Right cardiac atrium (tissue), 5 donors: ENCODE measurements at regions of chr1 and their contacts with region 1.

Region 1: DNA sequence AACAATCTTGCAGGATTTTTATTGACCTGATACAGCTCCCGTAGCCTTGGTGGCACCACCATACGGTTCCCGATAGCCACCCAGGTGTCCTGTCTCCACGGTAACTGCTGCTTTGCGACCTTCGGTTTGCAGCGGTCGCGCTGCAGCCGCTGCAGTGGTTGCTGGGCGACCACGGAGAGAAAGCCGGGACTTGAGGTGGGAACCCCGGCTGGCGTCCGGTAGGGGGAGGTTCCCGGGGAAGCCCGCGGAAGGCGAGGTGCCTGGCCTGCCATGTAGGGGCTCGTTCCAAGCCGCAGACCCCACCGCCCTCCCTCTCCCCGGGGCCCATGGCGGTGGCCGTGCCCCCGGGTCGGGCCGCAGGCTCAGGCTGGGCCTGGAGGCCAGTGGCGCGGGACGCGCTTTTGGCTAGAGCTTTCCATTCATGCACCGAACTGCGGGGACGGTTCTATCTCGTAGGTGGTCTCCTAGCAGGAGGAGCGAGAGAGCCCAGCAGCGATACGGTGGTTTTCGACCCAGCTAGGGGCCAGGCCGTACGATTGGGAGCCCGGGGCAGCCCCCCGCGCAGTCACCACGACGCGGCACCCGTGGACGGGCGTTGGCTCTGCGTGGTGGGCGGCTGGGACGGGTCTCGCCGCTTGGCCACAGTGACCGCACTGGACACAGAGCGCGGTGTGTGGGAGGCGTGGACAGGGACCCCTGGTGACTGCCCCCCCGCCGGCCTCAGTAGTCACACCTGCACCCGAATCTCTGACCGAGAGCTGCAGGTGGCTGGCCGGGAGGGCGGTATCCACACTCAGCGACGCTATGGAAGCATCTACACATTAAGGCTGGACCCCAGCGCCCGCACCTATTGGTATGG is at the start of gene KLHDC9:
- DNase-seq: peak; percentile 73 to 89 (median 88)
- ATAC-seq: peak; percentile 78 to 81
- H3K4me3 ChIP-seq: peak within 1 kb of the TSS; percentile 38
- H3K27ac ChIP-seq: no peak within 1 kb of the TSS
- H3K4me1 ChIP-seq: peaks cover 5% of the 10 kb centered on the region
- H3K27me3 ChIP-seq: no peaks in the 10 kb centered on the region
- total RNA-seq, gene KLHDC9: 3.4 to 5.4 (median 4.4) TPM

Region 2: GRCh38 chr1:160830321-160831153 is 267.9 kb before region 1 on chr1:
- intact Hi-C with region 1: loop called in 1 of 4 experiments (anchors 10 kb)
- DNase-seq: peak; percentile 51 to 86 (median 73)
- ATAC-seq: peak; percentile 38 to 67
- H3K4me3 ChIP-seq: no peak overlapping the region
- H3K27ac ChIP-seq: no peak overlapping the region
- H3K4me1 ChIP-seq: no peaks in the 10 kb centered on the region
- H3K27me3 ChIP-seq: no peaks in the 10 kb centered on the region

Region 3: DNA sequence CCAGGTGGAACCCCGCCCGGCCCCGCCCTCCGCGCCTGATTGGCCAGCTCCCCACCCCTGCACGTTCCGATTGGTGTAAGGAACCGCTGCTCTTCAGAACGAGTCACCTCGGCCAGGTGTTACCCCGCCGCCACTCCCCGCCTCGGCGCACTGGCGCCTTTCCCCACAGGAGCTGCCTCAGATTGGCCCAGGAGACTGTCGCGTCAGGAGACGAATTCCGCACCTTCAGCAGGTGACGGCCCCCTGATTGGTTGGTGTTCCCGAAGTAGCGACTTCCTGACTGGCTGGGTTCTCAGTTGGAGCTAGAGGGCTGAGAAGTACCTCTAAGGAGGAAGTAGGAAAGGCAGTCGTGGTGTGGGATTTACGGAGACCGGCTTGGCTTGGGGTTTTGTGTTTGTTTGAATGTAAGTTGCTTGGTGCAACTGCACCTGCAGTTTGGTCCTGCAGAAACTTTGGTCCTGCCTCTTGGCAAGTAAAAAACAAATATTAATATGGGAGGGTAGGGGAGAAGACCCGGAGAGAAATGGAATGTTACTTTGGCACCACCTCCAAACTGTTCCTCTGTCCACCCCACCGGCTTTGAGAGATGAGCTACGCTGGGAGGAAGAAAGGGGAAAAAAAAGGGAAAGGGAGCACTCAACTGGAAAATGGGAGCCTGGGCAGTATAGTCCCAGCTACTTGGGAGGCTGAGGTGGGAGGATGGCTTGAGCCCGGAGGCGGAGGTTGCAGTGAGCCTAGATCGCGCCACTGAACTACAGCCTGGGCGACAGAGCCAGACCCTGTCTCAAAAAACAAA is 77.1 kb before region 1 on chr1:
- intact Hi-C with region 1: no loop called
- DNase-seq: peak; percentile 79 to 91 (median 91)
- ATAC-seq: peak; percentile 89 to 92
- H3K4me3 ChIP-seq: peak overlapping the region; percentile 71
- H3K27ac ChIP-seq: no peak overlapping the region
- H3K4me1 ChIP-seq: peaks cover 9% of the 10 kb centered on the region
- H3K27me3 ChIP-seq: no peaks in the 10 kb centered on the region

Region 4: DNA sequence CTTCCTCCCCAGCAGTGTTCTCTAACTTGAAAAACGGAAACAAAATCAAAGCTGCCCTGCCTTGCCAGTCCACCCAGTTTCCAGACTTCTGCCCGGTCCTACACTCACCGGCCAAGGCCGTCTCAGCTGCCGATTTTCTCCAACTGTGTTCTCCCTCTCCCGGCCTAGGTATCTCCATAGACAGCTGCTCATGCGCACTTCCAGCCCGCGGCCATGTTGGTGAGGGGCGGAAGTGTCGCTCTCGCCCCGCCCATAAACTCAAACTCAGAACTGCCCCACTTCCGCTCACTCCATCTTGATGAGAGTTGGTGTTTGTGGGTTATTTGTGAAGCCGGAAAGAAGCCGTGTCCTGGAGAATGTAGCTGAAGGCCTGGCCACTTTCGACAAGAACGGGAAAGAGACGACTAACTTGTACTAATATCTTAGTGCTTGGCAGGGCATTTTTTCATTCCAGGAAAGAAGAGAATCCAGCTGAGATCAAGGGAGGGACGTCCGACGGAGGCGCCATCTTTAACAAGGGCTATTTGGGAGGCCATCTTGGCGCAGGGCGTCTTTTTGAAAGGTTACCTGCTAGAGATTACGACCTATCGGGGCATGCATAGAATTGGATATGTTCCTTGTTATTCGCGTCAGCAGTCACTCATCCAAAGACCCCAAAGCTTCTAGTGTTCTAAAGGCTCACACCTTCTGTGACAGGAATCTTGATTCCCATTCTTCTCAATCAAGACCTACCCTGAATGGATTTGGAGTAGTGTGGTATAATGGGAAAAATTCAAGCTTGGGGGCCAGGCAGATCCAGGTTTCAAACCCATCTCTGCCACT is 52.5 kb before region 1 on chr1 and contains the start of gene USF1:
- intact Hi-C with region 1: loop called in 1 of 4 experiments (anchors 5 kb)
- DNase-seq: peak; percentile 92 to 96 (median 96)
- ATAC-seq: peak; percentile 97 to 98
- H3K4me3 ChIP-seq: peak within 1 kb of the TSS; percentile 93
- H3K27ac ChIP-seq: peak within 1 kb of the TSS; percentile 93
- H3K4me1 ChIP-seq: peaks cover 3% of the 10 kb centered on the region
- H3K27me3 ChIP-seq: no peaks in the 10 kb centered on the region
- total RNA-seq, gene USF1: 34.5 to 41.4 (median 40.7) TPM